ENCODE measurements at regions of chr3 and their contacts with region 1.

Region 1: DNA sequence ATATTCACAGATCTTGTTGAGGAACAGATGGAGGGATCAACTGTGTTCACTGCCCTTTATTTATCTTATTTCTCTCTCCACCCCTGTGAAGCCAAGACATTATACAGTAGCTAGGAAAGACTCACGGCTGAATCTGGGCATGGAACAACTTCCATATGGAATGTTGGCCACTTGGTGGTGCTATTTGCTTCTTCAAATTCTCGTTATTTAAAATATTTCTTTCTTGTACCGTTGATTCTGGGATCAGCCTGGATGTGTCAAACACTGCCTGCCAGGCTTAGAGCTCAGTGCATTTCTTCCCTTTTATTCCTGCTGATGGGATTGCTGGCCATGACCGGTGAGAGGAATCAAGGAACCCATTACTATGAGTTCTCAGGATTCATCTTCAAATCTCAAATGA is 17.5 kb upstream of the GASK1A start:
- DNase-seq: peak in 6 of 9 donors; percentile 11 to 50 (median 42)
- ATAC-seq: peak; percentile 45
- H3K4me3 ChIP-seq: no peak overlapping the region
- H3K4me3 Mint-ChIP-seq: no peak overlapping the region
- H3K27ac ChIP-seq: no peak overlapping the region
- H3K27ac Mint-ChIP-seq: peak overlapping the region in 2 of 9 donors; percentile 2 to 24
- H3K4me1 ChIP-seq: peaks cover 0 to 27% of the 10 kb centered on the region in 2 donors
- H3K4me1 Mint-ChIP-seq: peaks cover 0 to 38% (median 34%) of the 10 kb centered on the region in 7 donors
- H3K27me3 ChIP-seq: no peaks in the 10 kb centered on the region
- H3K27me3 Mint-ChIP-seq: peaks cover 0 to 19% (median 3%) of the 10 kb centered on the region in 5 donors

Region 2: DNA sequence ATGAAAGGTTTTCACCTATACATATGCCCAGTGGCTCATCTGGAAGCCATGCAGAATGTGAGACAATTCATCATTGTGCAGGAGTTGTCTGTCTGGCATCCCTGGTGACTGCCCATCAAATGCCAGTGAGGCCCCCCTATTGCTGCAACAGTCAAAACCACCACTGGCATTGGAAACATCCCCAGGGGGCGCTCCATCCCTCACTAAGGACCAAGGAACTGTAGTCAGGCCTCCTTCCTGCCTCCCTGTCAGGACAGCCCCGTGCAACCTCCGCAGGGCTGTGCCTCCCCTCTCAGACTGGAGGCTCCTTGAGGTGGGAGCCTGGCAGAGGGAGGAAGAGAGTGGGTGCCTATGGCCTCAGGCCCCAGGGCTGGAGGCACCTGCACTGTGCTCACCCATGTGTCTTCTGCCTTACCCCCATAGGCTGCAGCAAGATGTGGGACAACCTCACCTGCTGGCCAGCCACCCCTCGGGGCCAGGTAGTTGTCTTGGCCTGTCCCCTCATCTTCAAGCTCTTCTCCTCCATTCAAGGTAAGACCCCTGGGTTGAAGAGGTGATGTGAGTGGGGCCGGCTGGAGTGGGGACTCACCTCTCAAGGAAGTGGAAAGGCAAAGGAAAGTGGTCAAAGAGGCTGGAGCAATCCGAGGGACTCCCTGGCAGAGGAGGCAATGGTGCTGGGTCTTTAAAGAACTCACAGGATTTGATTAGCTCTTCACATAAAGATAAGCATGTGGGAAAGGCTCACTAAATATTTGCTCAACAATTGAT is 442.6 kb before region 1 on chr3:
- CTCF ChIA-PET with region 1: no interaction called
- POLR2A ChIA-PET with region 1: no interaction called
- intact Hi-C with region 1: no loop called
- DNase-seq: peak in 3 of 9 donors; percentile 36 to 52 (median 49)
- ATAC-seq: peak; percentile 56
- H3K4me3 ChIP-seq: no peak overlapping the region
- H3K4me3 Mint-ChIP-seq: peak overlapping the region in 6 of 10 donors; percentile 28 to 73 (median 67)
- H3K27ac ChIP-seq: peak overlapping the region; percentile 51
- H3K27ac Mint-ChIP-seq: peak overlapping the region in 8 of 9 donors; percentile 73 to 95 (median 86)
- H3K4me1 ChIP-seq: peaks cover 0 to 23% of the 10 kb centered on the region in 2 donors
- H3K4me1 Mint-ChIP-seq: peaks cover 19 to 55% (median 39%) of the 10 kb centered on the region in 7 donors
- H3K27me3 ChIP-seq: no peaks in the 10 kb centered on the region
- H3K27me3 Mint-ChIP-seq: no peaks in the 10 kb centered on the region

Region 3: DNA sequence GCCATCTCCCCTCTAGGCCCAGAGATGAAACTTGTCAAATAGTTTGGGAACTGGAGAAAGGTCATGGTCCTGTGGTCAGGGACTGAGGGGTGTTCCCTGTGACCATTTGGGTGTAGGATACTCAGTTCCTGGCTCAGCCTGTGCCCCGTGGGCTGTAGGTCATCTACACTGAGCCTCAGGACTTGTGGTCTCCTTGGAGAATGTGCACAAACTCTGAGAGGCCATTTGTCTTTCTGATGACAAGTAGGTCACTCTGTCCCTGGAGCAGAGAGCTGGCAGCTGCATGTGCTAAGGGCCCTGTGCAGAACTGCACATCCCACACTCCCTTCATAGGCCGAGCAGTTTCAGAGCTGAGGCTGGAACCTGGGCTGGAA is 35.1 kb after region 1 on chr3:
- CTCF ChIA-PET with region 1: no interaction called
- POLR2A ChIA-PET with region 1: no interaction called
- intact Hi-C with region 1: no loop called
- DNase-seq: no peak
- ATAC-seq: no peak
- H3K4me3 ChIP-seq: no peak overlapping the region
- H3K4me3 Mint-ChIP-seq: no peak overlapping the region
- H3K27ac ChIP-seq: no peak overlapping the region
- H3K27ac Mint-ChIP-seq: no peak overlapping the region
- H3K4me1 ChIP-seq: no peaks in the 10 kb centered on the region
- H3K4me1 Mint-ChIP-seq: no peaks in the 10 kb centered on the region
- H3K27me3 ChIP-seq: no peaks in the 10 kb centered on the region
- H3K27me3 Mint-ChIP-seq: no peaks in the 10 kb centered on the region

Region 4: GRCh38 chr3:43010638-43011037 is 49.0 kb after region 1 on chr3:
- CTCF ChIA-PET with region 1: interaction called, 3 read pairs
- POLR2A ChIA-PET with region 1: no interaction called
- intact Hi-C with region 1: loop called in 1 of 2 experiments (anchors 5 kb)
- DNase-seq: no peak
- ATAC-seq: no peak
- H3K4me3 ChIP-seq: no peak overlapping the region
- H3K4me3 Mint-ChIP-seq: no peak overlapping the region
- H3K27ac ChIP-seq: no peak overlapping the region
- H3K27ac Mint-ChIP-seq: peak overlapping the region in 1 of 9 donors; percentile 65
- H3K4me1 ChIP-seq: peaks cover 0 to 29% of the 10 kb centered on the region in 2 donors
- H3K4me1 Mint-ChIP-seq: peaks cover 0 to 46% (median 26%) of the 10 kb centered on the region in 7 donors
- H3K27me3 ChIP-seq: no peaks in the 10 kb centered on the region
- H3K27me3 Mint-ChIP-seq: no peaks in the 10 kb centered on the region

Region 5: DNA sequence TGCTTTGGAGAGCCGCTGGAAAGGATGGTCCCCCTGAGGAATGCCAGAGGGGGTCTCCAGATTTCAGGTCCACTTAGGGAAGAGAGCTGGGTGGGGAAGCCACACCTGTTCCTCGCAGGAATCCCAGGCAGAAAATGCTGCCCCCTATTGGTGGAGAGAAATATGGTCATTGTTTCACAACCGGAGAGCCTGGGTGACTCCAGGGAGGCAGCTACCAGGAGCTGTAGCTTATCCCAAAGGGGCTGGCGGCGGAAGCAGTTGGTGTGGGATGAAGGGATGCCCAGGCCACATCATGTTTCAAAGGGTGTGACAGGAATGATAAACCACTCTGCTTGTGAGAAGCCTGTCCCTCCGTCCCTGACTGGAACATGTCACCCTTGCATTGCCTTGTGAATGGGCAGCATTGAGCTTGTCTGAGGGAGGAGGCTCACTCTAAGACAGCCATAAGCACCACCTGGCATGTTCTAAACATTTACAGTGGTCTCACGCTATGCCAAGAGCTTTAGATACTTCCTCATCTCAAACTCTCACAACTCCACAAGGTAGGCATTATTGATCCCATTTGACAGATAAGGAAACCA is 109.8 kb after region 1 on chr3:
- CTCF ChIA-PET with region 1: interaction called, 30 read pairs
- POLR2A ChIA-PET with region 1: interaction called, 4 read pairs
- intact Hi-C with region 1: loop called (anchors 2 kb)
- DNase-seq: peak in 6 of 9 donors; percentile 18 to 49 (median 30)
- ATAC-seq: no peak
- H3K4me3 ChIP-seq: no peak overlapping the region
- H3K4me3 Mint-ChIP-seq: no peak overlapping the region
- H3K27ac ChIP-seq: no peak overlapping the region
- H3K27ac Mint-ChIP-seq: no peak overlapping the region
- H3K4me1 ChIP-seq: no peaks in the 10 kb centered on the region
- H3K4me1 Mint-ChIP-seq: peaks cover 0 to 7% (median 0%) of the 10 kb centered on the region in 7 donors
- H3K27me3 ChIP-seq: no peaks in the 10 kb centered on the region
- H3K27me3 Mint-ChIP-seq: peaks cover 0 to 7% (median 0%) of the 10 kb centered on the region in 5 donors

Region 6: GRCh38 chr3:43223670-43224364 is 262.2 kb after region 1 on chr3:
- CTCF ChIA-PET with region 1: interaction called, 9 read pairs
- POLR2A ChIA-PET with region 1: no interaction called
- intact Hi-C with region 1: loop called in 1 of 2 experiments (anchors 1 kb)
- DNase-seq: peak in 4 of 9 donors; percentile 18 to 46 (median 38)
- ATAC-seq: peak; percentile 57
- H3K4me3 ChIP-seq: no peak overlapping the region
- H3K4me3 Mint-ChIP-seq: peak overlapping the region in 6 of 10 donors; percentile 20 to 77 (median 47)
- H3K27ac ChIP-seq: no peak overlapping the region
- H3K27ac Mint-ChIP-seq: peak overlapping the region in 7 of 9 donors; percentile 18 to 93 (median 87)
- H3K4me1 ChIP-seq: peaks cover 13 to 56% of the 10 kb centered on the region in 2 donors
- H3K4me1 Mint-ChIP-seq: peaks cover 25 to 67% (median 63%) of the 10 kb centered on the region in 7 donors
- H3K27me3 ChIP-seq: no peaks in the 10 kb centered on the region
- H3K27me3 Mint-ChIP-seq: no peaks in the 10 kb centered on the region

Region 7: GRCh38 chr3:43503067-43503728 is 541.6 kb after region 1 on chr3:
- CTCF ChIA-PET with region 1: interaction called, 44 read pairs
- POLR2A ChIA-PET with region 1: interaction called, 5 read pairs
- intact Hi-C with region 1: loop called (anchors 1 to 2 kb)
- DNase-seq: peak in 6 of 9 donors; percentile 39 to 68 (median 59)
- ATAC-seq: peak; percentile 68
- H3K4me3 ChIP-seq: no peak overlapping the region
- H3K4me3 Mint-ChIP-seq: no peak overlapping the region
- H3K27ac ChIP-seq: no peak overlapping the region
- H3K27ac Mint-ChIP-seq: peak overlapping the region in 4 of 9 donors; percentile 2 to 49 (median 24)
- H3K4me1 ChIP-seq: peaks cover 17 to 18% of the 10 kb centered on the region in 2 donors
- H3K4me1 Mint-ChIP-seq: peaks cover 18 to 51% (median 48%) of the 10 kb centered on the region in 7 donors
- H3K27me3 ChIP-seq: no peaks in the 10 kb centered on the region
- H3K27me3 Mint-ChIP-seq: peaks cover 0 to 8% (median 0%) of the 10 kb centered on the region in 5 donors

Region 8: GRCh38 chr3:44198284-44199269 is 1236.9 kb after region 1 on chr3:
- CTCF ChIA-PET with region 1: no interaction called
- POLR2A ChIA-PET with region 1: no interaction called
- intact Hi-C with region 1: loop called in 1 of 2 experiments (anchors 2 kb)
- DNase-seq: peak; percentile 23 to 68 (median 62)
- ATAC-seq: peak; percentile 83
- H3K4me3 ChIP-seq: no peak overlapping the region
- H3K4me3 Mint-ChIP-seq: no peak overlapping the region
- H3K27ac ChIP-seq: no peak overlapping the region
- H3K27ac Mint-ChIP-seq: no peak overlapping the region
- H3K4me1 ChIP-seq: no peaks in the 10 kb centered on the region
- H3K4me1 Mint-ChIP-seq: no peaks in the 10 kb centered on the region
- H3K27me3 ChIP-seq: no peaks in the 10 kb centered on the region
- H3K27me3 Mint-ChIP-seq: peaks cover 16 to 25% (median 18%) of the 10 kb centered on the region in 5 donors

Measured in naive thymus-derived CD4-positive, alpha-beta T cell (primary cell).